ENCODE measurements at regions of chr3 and their contacts with region 1.

Region 1: GRCh38 chr3:115905871-115906270 is 282.6 kb downstream of the GAP43 start:
- DNase-seq: no peak

Region 2: GRCh38 chr3:114974387-114974786 is 931.5 kb before region 1 on chr3:
- intact Hi-C with region 1: loop called in 1 of 2 experiments (anchors 5 kb)
- DNase-seq: no peak

Region 3: DNA sequence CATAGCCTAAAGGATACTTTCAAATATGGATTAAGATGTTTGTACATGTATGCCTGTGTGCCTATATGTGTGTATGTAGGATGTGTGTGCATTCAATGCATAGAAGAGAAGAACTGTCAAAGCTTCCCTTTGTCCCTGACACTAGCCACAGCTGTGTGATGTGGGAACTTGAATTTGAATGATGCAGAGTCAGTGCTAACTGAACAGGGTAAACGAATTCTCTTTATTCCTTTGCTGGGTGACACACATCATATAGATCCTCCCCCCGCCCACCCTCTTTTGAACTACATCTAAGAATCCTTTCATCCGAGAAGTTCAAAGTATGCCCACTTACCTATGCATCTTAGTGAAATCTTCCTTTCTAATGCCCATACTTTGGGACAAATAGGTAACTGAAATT is 54.3 kb before region 1 on chr3:
- intact Hi-C with region 1: loop called in 1 of 2 experiments (anchors 2 kb)
- DNase-seq: no peak

Region 4: DNA sequence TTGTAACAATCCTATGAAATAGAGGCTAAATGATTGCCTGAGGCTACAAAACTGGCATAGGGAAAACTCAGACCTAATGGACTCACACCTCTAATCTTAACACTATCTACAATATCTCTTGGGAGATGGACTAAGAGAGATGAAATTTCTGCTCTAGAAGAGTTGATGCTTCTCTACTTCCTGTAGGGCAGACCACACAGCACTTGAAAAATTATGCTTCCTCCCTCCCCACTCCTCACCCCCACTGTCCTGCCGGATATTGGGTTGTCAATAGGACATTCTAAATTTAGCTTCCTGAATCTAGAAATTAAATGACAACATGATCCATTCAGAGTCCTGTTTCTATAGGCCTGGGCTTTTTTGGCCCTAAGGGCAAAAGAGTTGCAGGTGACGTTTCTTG is 13.0 kb after region 1 on chr3:
- intact Hi-C with region 1: no loop called
- DNase-seq: no peak

Region 5: GRCh38 chr3:115937054-115937453 is 31.2 kb after region 1 on chr3:
- intact Hi-C with region 1: no loop called
- DNase-seq: no peak

Measured in posterior vena cava (tissue), 2 donors.